H1 (cell line): ENCODE measurements at regions of chr6 and their contacts with region 1.

Region 1: GRCh38 chr6:134908906-134909516 is 40.9 kb downstream of the ALDH8A1 start:
- DNase-seq: no peak
- H3K4me3 ChIP-seq: no peak overlapping the region
- H3K27ac ChIP-seq: no peak overlapping the region
- H3K4me1 ChIP-seq: no peaks in the 10 kb centered on the region
- H3K27me3 ChIP-seq: no peaks in the 10 kb centered on the region
- CTCF ChIP-seq: no peak
- EP300 ChIP-seq: no peak
- POLR2A ChIP-seq: no peak
- RAD21 ChIP-seq: no peak

Region 2: GRCh38 chr6:134835993-134836392 is 73.0 kb before region 1 on chr6:
- CTCF ChIA-PET with region 1: no interaction called
- POLR2A ChIA-PET with region 1: no interaction called
- DNase-seq: no peak
- H3K4me3 ChIP-seq: no peak overlapping the region
- H3K27ac ChIP-seq: no peak overlapping the region
- H3K4me1 ChIP-seq: 0 out of 7 replicates have a peak, but pooled peaks cover 0 to 3% (median 0%) of the 10 kb centered on the region in 4 experiments
- H3K27me3 ChIP-seq: no peaks in the 10 kb centered on the region
- CTCF ChIP-seq: no peak
- EP300 ChIP-seq: no peak
- POLR2A ChIP-seq: no peak
- RAD21 ChIP-seq: no peak

Region 3: DNA sequence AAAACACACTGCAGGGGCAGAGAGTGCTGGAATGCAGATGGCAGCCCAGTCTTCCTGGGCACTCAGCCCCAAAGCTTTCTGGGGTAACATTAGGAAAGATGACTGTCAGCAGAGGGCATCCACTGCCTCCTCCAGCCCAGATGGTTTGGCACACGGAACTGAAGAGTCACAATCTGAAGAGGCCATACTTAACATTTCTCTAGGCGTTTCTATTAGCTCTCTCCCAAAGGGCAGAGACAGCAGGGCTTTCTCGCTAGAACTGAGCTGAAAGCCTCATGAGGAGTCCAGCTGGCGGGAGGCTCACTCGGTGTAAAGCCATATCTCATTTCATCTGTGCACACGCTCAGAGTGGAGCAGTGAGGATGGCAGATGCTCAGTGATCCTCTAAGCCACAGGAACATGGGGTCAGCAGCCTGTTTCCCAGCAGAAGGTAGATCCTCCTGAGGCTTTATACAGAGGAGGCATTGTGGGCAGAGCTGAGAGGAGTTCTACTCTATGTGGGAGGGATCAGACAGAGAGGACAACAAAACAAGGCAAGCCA is 12.8 kb after region 1 on chr6:
- CTCF ChIA-PET with region 1: interaction called, 10 read pairs
- POLR2A ChIA-PET with region 1: no interaction called
- DNase-seq: no peak
- H3K4me3 ChIP-seq: no peak overlapping the region
- H3K27ac ChIP-seq: no peak overlapping the region
- H3K4me1 ChIP-seq: no peaks in the 10 kb centered on the region; a peak in 1 of 7 replicates
- H3K27me3 ChIP-seq: no peaks in the 10 kb centered on the region
- CTCF ChIP-seq: no peak
- EP300 ChIP-seq: no peak
- POLR2A ChIP-seq: no peak
- RAD21 ChIP-seq: no peak